ENCODE measurements at regions of chr5 and their contacts with region 1.

Region 1: DNA sequence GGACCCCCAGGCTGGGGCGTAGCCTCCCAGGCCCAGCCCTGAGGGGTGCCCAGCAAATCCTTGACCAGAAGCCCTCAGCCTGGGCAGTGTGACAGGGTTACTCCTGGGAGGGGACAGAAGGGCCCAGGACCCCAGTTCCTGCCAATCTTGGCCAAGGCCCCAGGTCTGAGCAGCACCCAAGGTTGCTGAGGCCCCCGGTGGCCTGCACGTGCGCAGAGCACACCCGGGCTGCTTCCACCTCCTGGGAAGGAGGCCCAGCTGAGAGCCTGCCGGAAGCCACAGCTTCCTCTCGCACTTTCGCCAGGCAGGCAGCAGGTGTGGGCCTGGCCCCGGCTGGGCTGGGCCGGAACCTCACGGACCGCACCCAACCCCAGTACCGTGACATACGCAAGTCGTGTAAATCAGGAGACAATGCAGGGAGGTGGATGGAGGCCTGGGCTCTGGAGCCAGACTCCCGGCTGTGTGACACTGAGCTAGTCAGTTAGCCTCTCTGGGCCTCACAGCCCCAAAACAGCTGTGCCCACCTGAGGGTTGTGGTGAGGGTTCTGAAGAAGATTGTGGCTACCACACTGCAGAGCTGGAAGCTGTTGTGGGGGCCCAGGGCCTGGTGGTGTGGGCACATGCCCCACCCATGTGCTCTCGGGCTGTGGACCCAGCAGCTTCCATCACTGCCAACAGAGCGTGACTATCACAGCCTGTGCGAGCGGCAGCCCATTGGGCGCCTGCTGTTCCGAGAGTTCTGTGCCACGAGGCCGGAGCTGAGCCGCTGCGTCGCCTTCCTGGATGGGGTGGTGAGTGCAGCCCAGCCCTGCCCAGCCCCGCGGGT is 5.1 kb downstream of the GRK6 start:
- DNase-seq: peak; percentile 89
- H3K4me3 Mint-ChIP-seq: peak overlapping the region; percentile 91
- H3K27ac Mint-ChIP-seq: peak overlapping the region; percentile 93
- H3K4me1 Mint-ChIP-seq: peaks cover 72% of the 10 kb centered on the region
- H3K27me3 Mint-ChIP-seq: no peaks in the 10 kb centered on the region

Region 2: GRCh38 chr5:177317959-177318377 is 113.6 kb before region 1 on chr5:
- CTCF ChIA-PET with region 1: interaction called, 10 read pairs
- POLR2A ChIA-PET with region 1: interaction called, 25 read pairs
- DNase-seq: peak; percentile 81
- H3K4me3 Mint-ChIP-seq: no peak overlapping the region
- H3K27ac Mint-ChIP-seq: no peak overlapping the region
- H3K4me1 Mint-ChIP-seq: peaks cover 53% of the 10 kb centered on the region
- H3K27me3 Mint-ChIP-seq: no peaks in the 10 kb centered on the region

Region 3: GRCh38 chr5:177446200-177447065 is 14.9 kb after region 1 on chr5 and contains the start of gene PRR7:
- CTCF ChIA-PET with region 1: interaction called, 22 read pairs
- POLR2A ChIA-PET with region 1: interaction called, 654 read pairs
- DNase-seq: peak; percentile 74
- H3K4me3 Mint-ChIP-seq: peak within 1 kb of the TSS; percentile 70
- H3K27ac Mint-ChIP-seq: peak within 1 kb of the TSS; percentile 80
- H3K4me1 Mint-ChIP-seq: peaks cover 51% of the 10 kb centered on the region
- H3K27me3 Mint-ChIP-seq: peaks cover 10% of the 10 kb centered on the region
- total RNA-seq, gene PRR7: 4.9 to 5.8 TPM